WTC11 (cell line): ENCODE measurements at regions of chr6 and their contacts with region 1.

Region 1: DNA sequence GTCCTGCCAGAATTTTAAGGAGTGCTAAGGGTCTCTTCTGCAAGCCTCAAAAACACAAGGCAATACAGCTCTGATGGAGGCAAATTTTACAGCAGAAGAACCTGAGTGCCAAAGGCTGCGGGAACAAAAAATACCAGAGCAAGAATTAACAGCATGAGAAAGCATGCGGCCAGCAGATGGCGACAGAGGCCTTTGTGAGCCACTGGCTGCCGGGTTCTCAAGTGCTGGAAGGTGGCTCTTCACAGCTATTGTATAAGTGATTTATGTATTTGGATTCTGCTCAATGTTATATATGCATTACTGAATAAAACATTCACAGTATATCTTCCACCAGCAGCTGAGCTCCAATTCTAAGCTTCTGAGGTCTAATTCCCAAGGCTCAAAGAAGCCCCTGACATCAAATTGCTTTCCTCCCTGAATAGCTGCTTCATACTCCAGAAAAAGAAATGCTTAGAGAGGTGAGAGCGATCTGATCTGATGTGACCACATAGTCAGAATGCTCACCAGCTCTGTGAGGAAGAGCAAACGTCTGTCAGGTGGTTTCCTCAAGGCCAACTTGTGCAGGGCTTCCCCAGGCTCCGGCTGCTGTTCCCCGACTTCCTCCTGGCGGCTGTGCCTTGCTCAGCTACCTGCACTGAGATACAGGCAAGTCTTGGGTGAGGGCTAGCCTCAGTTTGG is 58.6 kb downstream of the PPP1R3G start:
- DNase-seq: peak; percentile 86
- ATAC-seq: peak; percentile 55
- H3K4me3 Mint-ChIP-seq: no peak overlapping the region
- H3K27ac Mint-ChIP-seq: peak overlapping the region; percentile 93
- H3K4me1 Mint-ChIP-seq: peaks cover 17% of the 10 kb centered on the region
- H3K27me3 Mint-ChIP-seq: peaks cover 2% of the 10 kb centered on the region; the same call in 1 of the 2 replicates
- CTCF ChIP-seq: peak; percentile 76

Region 2: GRCh38 chr6:5058254-5058653 is 85.5 kb before region 1 on chr6:
- CTCF ChIA-PET with region 1: interaction called, 16 read pairs
- POLR2A ChIA-PET with region 1: no interaction called
- DNase-seq: no peak
- ATAC-seq: no peak
- H3K4me3 Mint-ChIP-seq: no peak overlapping the region
- H3K27ac Mint-ChIP-seq: no peak overlapping the region
- H3K4me1 Mint-ChIP-seq: peaks cover 9% of the 10 kb centered on the region
- H3K27me3 Mint-ChIP-seq: no peaks in the 10 kb centered on the region
- CTCF ChIP-seq: no peak

Region 3: GRCh38 chr6:5119090-5119951 is 24.5 kb before region 1 on chr6:
- CTCF ChIA-PET with region 1: no interaction called
- POLR2A ChIA-PET with region 1: no interaction called
- DNase-seq: no peak
- ATAC-seq: no peak
- H3K4me3 Mint-ChIP-seq: no peak overlapping the region
- H3K27ac Mint-ChIP-seq: no peak overlapping the region
- H3K4me1 Mint-ChIP-seq: peaks cover 6% of the 10 kb centered on the region
- H3K27me3 Mint-ChIP-seq: no peaks in the 10 kb centered on the region
- CTCF ChIP-seq: no peak

Region 4: GRCh38 chr6:5132731-5133341 is 10.9 kb before region 1 on chr6:
- CTCF ChIA-PET with region 1: interaction called, 27 read pairs
- POLR2A ChIA-PET with region 1: interaction called, 4 read pairs
- DNase-seq: peak; percentile 48
- ATAC-seq: peak; percentile 85
- H3K4me3 Mint-ChIP-seq: peak overlapping the region; percentile 53
- H3K27ac Mint-ChIP-seq: peak overlapping the region; percentile 99
- H3K4me1 Mint-ChIP-seq: peaks cover 62% of the 10 kb centered on the region
- H3K27me3 Mint-ChIP-seq: no peaks in the 10 kb centered on the region
- CTCF ChIP-seq: no peak

Region 5: GRCh38 chr6:5167501-5167900 is 23.7 kb after region 1 on chr6:
- CTCF ChIA-PET with region 1: interaction called, 15 read pairs
- POLR2A ChIA-PET with region 1: no interaction called
- DNase-seq: no peak
- ATAC-seq: no peak
- H3K4me3 Mint-ChIP-seq: no peak overlapping the region
- H3K27ac Mint-ChIP-seq: no peak overlapping the region
- H3K4me1 Mint-ChIP-seq: peaks cover 5% of the 10 kb centered on the region
- H3K27me3 Mint-ChIP-seq: no peaks in the 10 kb centered on the region
- CTCF ChIP-seq: no peak

Region 6: GRCh38 chr6:5192135-5192794 is 48.5 kb after region 1 on chr6:
- CTCF ChIA-PET with region 1: interaction called, 11 read pairs
- POLR2A ChIA-PET with region 1: no interaction called
- DNase-seq: no peak
- ATAC-seq: peak; percentile 84
- H3K4me3 Mint-ChIP-seq: no peak overlapping the region
- H3K27ac Mint-ChIP-seq: no peak overlapping the region
- H3K4me1 Mint-ChIP-seq: peaks cover 16% of the 10 kb centered on the region
- H3K27me3 Mint-ChIP-seq: no peaks in the 10 kb centered on the region
- CTCF ChIP-seq: no peak

Region 7: GRCh38 chr6:5214570-5215052 is 70.8 kb after region 1 on chr6:
- CTCF ChIA-PET with region 1: interaction called, 28 read pairs
- POLR2A ChIA-PET with region 1: no interaction called
- DNase-seq: peak; percentile 82
- ATAC-seq: peak; percentile 98
- H3K4me3 Mint-ChIP-seq: no peak overlapping the region
- H3K27ac Mint-ChIP-seq: no peak overlapping the region
- H3K4me1 Mint-ChIP-seq: peaks cover 20% of the 10 kb centered on the region
- H3K27me3 Mint-ChIP-seq: no peaks in the 10 kb centered on the region
- CTCF ChIP-seq: peak; percentile 94

Region 8: DNA sequence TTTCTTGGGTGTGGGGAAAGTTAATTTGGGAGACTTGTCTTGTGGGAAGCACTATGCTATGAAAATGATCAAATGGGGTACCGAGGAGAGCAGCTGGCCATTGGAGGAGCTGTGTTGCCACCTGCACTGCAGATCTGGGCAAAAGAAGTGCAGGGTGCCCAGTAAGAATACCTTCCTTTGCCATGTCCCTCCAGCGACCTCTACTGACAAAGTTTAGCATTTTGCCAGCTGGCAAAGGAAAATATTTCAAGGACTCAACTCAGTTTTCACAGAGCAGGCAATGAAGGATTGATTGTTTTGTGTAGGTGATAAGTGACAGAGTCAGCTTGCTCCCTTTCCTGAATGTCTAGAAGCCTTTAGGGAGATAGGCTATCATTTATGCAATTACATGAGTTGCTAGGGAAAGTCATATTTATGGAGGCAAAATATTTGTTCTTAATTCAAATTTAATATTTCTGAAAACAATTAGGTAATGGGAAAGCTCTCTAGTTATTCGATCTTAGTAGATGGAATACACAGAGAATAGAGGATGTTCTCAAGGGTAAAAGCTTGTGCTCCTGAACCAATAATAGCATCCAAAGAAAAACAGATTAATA is 236.0 kb after region 1 on chr6:
- CTCF ChIA-PET with region 1: interaction called, 54 read pairs
- POLR2A ChIA-PET with region 1: no interaction called
- DNase-seq: peak; percentile 61
- ATAC-seq: peak; percentile 84
- H3K4me3 Mint-ChIP-seq: no peak overlapping the region
- H3K27ac Mint-ChIP-seq: no peak overlapping the region
- H3K4me1 Mint-ChIP-seq: peaks cover 8% of the 10 kb centered on the region
- H3K27me3 Mint-ChIP-seq: no peaks in the 10 kb centered on the region
- CTCF ChIP-seq: peak; percentile 58; the same call in 1 of the 2 replicates

Region 9: GRCh38 chr6:5782783-5783547 is 639.2 kb after region 1 on chr6:
- CTCF ChIA-PET with region 1: no interaction called
- POLR2A ChIA-PET with region 1: no interaction called
- DNase-seq: no peak
- ATAC-seq: peak; percentile 35; the same call in 1 of the 2 replicates
- H3K4me3 Mint-ChIP-seq: no peak overlapping the region
- H3K27ac Mint-ChIP-seq: no peak overlapping the region
- H3K4me1 Mint-ChIP-seq: peaks cover 43% of the 10 kb centered on the region
- H3K27me3 Mint-ChIP-seq: no peaks in the 10 kb centered on the region; the same call in 1 of the 2 replicates
- CTCF ChIP-seq: no peak